IMR-90 (cell line): ENCODE measurements at regions of chr18 and their contacts with region 1.

Region 1: DNA sequence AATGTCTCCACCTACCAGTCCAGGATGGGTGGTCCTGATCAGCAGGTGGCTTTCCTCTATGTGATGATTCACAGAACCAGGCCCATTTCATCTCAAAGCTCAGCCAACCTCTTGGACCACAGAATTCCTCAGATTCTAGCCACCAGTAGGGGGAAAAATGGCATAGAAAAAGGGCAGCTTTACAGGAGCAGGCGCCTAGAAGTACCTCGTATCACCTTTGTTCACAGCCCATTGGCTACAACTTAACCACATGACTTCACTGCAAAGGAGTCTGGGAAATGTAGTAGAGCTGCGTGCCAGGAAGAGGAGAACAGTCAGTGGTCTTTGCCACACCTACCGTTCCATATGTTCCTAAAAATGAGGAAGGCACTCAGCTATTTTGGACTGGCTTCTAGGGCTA is 62.8 kb upstream of the DTNA start:
- DNase-seq: no peak
- ATAC-seq: no peak
- H3K4me3 ChIP-seq: no peak overlapping the region
- H3K27ac ChIP-seq: no peak overlapping the region
- H3K4me1 ChIP-seq: peaks cover 4% of the 10 kb centered on the region; the same call in 1 of the 2 replicates
- H3K27me3 ChIP-seq: no peaks in the 10 kb centered on the region
- CTCF ChIP-seq: no peak
- POLR2A ChIP-seq: no peak
- RAD21 ChIP-seq: no peak

Region 2: DNA sequence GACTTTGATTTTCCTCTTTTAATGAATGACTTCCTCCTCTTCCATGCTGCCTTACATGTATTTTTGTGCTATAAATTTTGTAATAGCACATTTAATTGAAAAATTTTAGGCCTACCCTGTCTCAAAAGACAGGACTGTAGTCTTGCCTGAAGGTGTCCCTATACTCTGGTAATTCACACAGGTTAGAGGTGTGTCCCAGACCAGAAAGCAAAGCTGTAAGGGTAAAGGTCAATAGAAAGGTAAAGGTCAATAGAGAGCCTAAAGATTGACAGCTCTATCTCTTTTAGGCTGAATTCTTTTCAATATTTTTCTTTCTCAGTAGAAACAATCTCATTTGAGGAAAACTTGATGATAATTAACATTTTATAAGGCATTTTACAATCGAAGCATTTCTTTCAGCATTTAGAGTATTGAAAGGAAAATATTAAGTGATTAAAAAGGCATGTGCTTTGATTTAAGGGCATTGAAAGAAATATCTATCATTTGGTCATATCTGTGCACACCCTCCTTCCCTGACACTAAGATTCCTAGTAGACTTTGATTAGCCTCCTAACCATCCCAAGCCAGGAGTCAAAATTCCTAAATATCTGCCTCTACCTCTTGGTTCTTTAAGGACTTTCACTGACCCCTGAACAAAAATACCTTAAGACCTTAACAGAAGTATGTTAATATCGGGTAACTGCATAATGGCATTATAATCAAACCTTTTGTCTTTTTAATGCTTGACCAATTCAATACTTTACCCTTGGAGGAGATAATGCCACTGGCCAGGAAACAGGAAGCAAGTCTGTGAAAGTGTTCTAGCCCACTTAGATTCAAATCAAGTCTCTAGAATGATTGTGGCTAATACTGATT is 98.9 kb before region 1 on chr18:
- CTCF ChIA-PET with region 1: no interaction called
- POLR2A ChIA-PET with region 1: no interaction called
- dilution Hi-C with region 1: no loop called
- in situ Hi-C with region 1: no loop called
- intact Hi-C with region 1: loop called (anchors 5 kb)
- DNase-seq: no peak
- ATAC-seq: no peak
- H3K4me3 ChIP-seq: no peak overlapping the region
- H3K27ac ChIP-seq: no peak overlapping the region
- H3K4me1 ChIP-seq: no peaks in the 10 kb centered on the region
- H3K27me3 ChIP-seq: no peaks in the 10 kb centered on the region
- CTCF ChIP-seq: no peak
- POLR2A ChIP-seq: no peak
- RAD21 ChIP-seq: no peak

Region 3: DNA sequence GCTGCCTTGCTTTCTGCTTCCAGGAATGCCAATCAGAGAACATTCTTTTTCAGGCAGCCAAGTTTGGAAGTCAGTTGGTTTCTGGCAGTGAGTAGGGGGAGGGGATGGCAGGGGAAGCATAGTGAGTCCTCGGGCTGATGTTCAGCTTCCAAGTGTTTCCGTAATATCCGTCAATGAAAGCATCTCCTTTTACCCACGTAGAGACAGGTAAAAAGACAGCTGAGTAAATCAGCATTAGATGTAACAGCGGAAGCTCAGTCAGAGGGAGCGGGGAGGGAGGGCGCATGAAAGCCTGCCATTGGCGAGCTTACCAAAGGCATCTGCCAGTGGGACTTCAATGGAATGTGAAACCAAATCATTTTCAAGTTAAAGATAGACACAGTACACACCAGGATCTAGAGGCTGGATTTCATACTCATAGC is 54.3 kb before region 1 on chr18:
- CTCF ChIA-PET with region 1: no interaction called
- POLR2A ChIA-PET with region 1: no interaction called
- dilution Hi-C with region 1: no loop called
- in situ Hi-C with region 1: no loop called
- intact Hi-C with region 1: loop called (anchors 5 kb)
- DNase-seq: peak; percentile 59
- ATAC-seq: peak; percentile 98
- H3K4me3 ChIP-seq: peak overlapping the region; percentile 40
- H3K27ac ChIP-seq: peak overlapping the region; percentile 12; the same call in 1 of the 2 replicates
- H3K4me1 ChIP-seq: peaks cover 4% of the 10 kb centered on the region
- H3K27me3 ChIP-seq: peaks cover 3% of the 10 kb centered on the region
- CTCF ChIP-seq: no peak
- POLR2A ChIP-seq: no peak
- RAD21 ChIP-seq: no peak